Activated CD4-positive, alpha-beta T cell treated with anti-CD3 and anti-CD28 coated beads, Interleukin-2, amount 10 ng/mL, durations not matched to agents 24 days and 14 days (primary cell): ENCODE measurements at regions of chr19 and their contacts with region 1.

Region 1: GRCh38 chr19:10251792-10252694 is at the start of gene MRPL4:
- DNase-seq: peak; percentile 99
- H3K4me3 Mint-ChIP-seq: peak within 1 kb of the TSS; percentile 94
- H3K27ac Mint-ChIP-seq: peak within 1 kb of the TSS; percentile 95
- H3K4me1 Mint-ChIP-seq: peaks cover 23% of the 10 kb centered on the region
- H3K27me3 Mint-ChIP-seq: no peaks in the 10 kb centered on the region
- total RNA-seq, gene MRPL4: 163 and 174 TPM in 2 replicates

Region 2: GRCh38 chr19:10074153-10074552 is 177.9 kb before region 1 on chr19:
- intact Hi-C with region 1: loop called (anchors 1 kb)
- DNase-seq: peak; percentile 81
- H3K4me3 Mint-ChIP-seq: no peak overlapping the region
- H3K27ac Mint-ChIP-seq: no peak overlapping the region
- H3K4me1 Mint-ChIP-seq: no peaks in the 10 kb centered on the region
- H3K27me3 Mint-ChIP-seq: peaks cover 17% of the 10 kb centered on the region

Region 3: DNA sequence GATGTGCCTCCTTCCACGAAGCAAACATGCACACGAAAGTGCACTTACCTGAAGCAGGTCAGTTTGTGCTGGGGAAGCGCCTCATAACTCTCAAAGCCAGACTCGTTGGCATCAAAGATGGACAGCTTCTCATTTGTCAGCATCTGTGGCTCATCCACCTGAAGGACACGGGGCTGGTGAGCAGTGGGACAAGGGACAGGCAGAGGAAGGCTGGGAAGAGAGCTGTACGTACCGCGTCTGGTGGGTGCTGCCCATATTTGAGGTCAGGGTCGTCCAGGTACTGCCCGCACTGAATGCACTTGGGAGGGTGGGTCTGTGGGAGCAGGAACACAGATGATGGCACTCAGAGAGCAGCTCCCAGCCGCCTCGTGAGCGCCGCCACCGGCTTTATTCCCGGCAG is 92.4 kb before region 1 on chr19:
- intact Hi-C with region 1: loop called (anchors 5 kb)
- DNase-seq: no peak
- H3K4me3 Mint-ChIP-seq: no peak overlapping the region
- H3K27ac Mint-ChIP-seq: no peak overlapping the region
- H3K4me1 Mint-ChIP-seq: peaks cover 2% of the 10 kb centered on the region
- H3K27me3 Mint-ChIP-seq: no peaks in the 10 kb centered on the region

Region 4: GRCh38 chr19:10173257-10173926 is 78.7 kb before region 1 on chr19:
- intact Hi-C with region 1: no loop called
- DNase-seq: no peak
- H3K4me3 Mint-ChIP-seq: no peak overlapping the region
- H3K27ac Mint-ChIP-seq: peak overlapping the region; percentile 1
- H3K4me1 Mint-ChIP-seq: peaks cover 9% of the 10 kb centered on the region
- H3K27me3 Mint-ChIP-seq: no peaks in the 10 kb centered on the region

Region 5: DNA sequence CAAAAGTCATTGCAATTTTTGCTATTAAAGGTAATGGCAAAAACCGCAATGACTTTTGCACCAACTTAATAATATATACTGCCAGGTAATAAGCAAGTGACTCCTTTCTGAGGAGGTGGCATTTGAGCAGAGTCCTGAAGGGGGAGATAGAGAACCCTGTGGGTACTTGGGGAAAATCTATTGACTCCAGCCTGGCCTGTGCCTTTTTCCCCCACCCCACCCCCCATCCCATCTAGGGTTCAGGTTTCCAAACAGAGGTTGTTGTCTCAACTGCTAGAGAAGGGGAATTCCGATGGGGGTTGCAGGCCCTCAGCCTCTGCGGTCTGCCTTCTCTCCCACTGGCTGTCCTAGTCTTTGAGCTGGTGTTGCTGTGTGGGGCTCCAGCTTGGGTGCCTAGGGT is 32.4 kb before region 1 on chr19:
- intact Hi-C with region 1: loop called (anchors 5 kb)
- DNase-seq: peak; percentile 72
- H3K4me3 Mint-ChIP-seq: no peak overlapping the region
- H3K27ac Mint-ChIP-seq: no peak overlapping the region
- H3K4me1 Mint-ChIP-seq: peaks cover 7% of the 10 kb centered on the region
- H3K27me3 Mint-ChIP-seq: no peaks in the 10 kb centered on the region

Region 6: DNA sequence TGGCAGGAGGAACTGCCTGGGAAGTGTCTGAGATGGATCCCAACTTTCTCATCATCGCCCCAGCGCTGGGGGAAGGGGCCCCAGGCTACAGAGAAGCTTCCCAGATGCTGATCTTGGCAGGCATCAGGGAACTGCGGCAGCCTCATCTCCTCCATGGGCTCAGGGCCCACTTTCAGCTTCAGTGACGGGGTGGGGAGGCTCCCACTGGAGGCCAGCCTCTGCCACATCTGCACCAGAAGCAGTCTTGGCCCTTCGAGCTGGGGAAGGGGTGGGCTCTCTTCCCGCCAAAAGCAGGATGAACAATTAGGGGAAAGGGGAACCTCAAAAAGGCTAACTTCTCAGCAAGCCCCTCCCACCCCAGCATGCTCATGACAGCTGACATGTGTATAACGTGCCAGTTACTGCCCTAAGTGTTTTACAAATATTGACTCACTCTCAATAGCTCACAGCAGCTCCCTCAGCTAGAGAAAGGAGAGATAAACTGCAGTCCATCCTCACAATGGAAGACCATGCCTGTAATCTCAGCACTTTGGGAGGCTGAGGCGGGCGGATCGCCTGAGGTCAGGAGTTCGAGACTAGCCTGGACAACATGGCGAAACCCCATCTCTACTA is 13.8 kb before region 1 on chr19:
- intact Hi-C with region 1: no loop called
- DNase-seq: no peak
- H3K4me3 Mint-ChIP-seq: no peak overlapping the region
- H3K27ac Mint-ChIP-seq: no peak overlapping the region
- H3K4me1 Mint-ChIP-seq: peaks cover 12% of the 10 kb centered on the region
- H3K27me3 Mint-ChIP-seq: no peaks in the 10 kb centered on the region

Region 7: GRCh38 chr19:10279737-10280442 is 27.8 kb after region 1 on chr19:
- intact Hi-C with region 1: no loop called
- DNase-seq: no peak
- H3K4me3 Mint-ChIP-seq: no peak overlapping the region
- H3K27ac Mint-ChIP-seq: peak overlapping the region; percentile 74
- H3K4me1 Mint-ChIP-seq: peaks cover 22% of the 10 kb centered on the region
- H3K27me3 Mint-ChIP-seq: no peaks in the 10 kb centered on the region